Psoas muscle (tissue), 8 donors: ENCODE measurements at regions of chr17 and their contacts with region 1.

Region 1: DNA sequence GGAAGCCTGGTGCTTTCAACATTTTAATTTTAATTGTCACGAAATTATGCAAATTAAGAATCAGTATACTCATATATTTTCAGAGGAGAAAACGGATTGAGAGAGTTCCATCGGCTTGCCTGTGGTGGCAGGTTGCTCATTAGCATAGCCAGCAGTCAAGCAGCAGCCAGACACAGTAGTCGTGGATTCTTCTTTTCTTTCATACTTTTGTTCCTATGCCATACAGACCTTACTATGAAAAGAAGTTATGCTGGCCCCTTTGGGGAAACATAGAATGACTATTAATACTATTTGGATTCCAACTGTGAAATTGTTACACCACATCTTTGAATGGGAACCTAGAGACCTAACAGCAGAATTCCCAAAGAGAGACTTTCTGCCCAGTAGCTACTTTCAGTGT is 617.7 kb upstream of the CA10 start:
- DNase-seq: no peak
- ATAC-seq: no peak
- H3K4me3 ChIP-seq: no peak overlapping the region
- H3K27ac ChIP-seq: no peak overlapping the region
- H3K4me1 ChIP-seq: no peaks in the 10 kb centered on the region
- H3K27me3 ChIP-seq: no peaks in the 10 kb centered on the region
- CTCF ChIP-seq: no peak

Region 2: DNA sequence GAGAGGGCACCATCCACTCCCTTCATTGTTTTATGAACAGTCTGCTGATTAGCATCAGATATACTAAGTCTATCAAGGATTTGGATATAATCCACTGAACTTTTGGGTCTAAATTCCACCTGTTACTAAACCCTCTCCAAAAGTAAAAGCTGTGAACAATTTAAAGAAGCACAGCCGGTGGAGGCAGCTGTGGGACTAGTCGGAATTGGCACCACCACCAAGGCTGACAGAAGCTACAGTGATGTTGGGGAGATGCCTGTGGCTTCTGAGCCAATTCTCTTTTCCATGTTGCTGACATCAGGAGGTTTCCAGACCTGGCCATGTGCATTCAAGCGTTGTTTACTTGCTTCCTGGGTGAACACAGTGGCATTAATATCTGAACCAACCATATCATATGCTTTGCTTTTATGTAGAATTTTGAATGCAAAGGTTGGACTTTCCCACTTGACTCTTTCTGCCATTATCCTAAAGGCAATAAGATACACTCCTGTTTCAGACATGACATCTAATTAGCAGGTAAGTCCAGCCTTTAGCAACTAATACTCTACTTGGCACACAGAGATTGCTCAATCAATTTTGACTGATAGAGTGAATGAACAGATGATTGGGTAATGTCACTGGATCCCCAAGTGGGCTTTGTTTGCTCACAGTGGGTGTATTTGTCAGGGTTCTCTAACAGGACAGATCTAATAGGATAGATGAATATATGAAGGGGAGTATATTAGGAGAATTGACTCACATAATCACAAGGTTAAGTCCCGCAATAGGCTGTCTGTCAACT is 61.4 kb after region 1 on chr17:
- intact Hi-C with region 1: loop called in 1 of 2 experiments (anchors 10 kb)
- DNase-seq: no peak
- ATAC-seq: no peak
- H3K4me3 ChIP-seq: no peak overlapping the region
- H3K27ac ChIP-seq: no peak overlapping the region
- H3K4me1 ChIP-seq: no peaks in the 10 kb centered on the region
- H3K27me3 ChIP-seq: no peaks in the 10 kb centered on the region
- CTCF ChIP-seq: no peak